Activated CD8-positive, alpha-beta T cell treated with anti-CD3 and anti-CD28 coated beads for 36 hours (primary cell): ENCODE measurements at regions of chr2 and their contacts with region 1.

Region 1: DNA sequence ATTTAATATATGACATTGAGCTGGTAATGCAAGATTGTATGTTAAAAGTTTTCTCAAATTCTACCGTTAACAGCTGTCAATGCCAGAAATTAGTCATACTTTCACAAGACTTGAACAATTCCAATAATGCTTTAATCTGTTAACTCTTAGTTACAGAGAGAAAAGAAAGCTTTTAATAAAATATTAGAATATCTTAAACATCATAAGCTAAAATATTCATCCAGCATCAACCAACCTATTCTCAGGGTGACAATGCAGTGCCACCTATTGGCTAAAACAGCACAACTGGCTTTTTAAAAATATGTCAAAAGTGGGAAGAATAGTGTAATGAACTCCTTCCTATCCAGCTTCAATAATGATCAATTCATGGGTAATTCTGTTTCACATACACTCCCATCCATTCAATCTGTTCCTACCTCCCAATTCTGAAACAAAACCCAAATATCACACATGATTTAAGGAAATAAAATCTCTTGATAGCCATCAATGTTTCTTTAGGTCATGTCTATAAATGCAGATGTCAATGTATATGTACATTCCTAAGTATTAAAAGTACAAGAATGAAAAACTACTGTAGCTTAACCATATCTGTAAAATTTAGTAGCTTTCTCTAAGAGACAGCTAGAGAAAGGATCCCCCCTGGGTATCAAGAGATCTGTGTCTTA is 79.8 kb upstream of the CCDC141 start:
- DNase-seq: peak; percentile 22
- ATAC-seq: no peak
- H3K4me3 Mint-ChIP-seq: no peak overlapping the region
- H3K27ac Mint-ChIP-seq: no peak overlapping the region
- H3K4me1 Mint-ChIP-seq: no peaks in the 10 kb centered on the region
- H3K27me3 Mint-ChIP-seq: no peaks in the 10 kb centered on the region
- CTCF ChIP-seq: peak; percentile 75

Region 2: DNA sequence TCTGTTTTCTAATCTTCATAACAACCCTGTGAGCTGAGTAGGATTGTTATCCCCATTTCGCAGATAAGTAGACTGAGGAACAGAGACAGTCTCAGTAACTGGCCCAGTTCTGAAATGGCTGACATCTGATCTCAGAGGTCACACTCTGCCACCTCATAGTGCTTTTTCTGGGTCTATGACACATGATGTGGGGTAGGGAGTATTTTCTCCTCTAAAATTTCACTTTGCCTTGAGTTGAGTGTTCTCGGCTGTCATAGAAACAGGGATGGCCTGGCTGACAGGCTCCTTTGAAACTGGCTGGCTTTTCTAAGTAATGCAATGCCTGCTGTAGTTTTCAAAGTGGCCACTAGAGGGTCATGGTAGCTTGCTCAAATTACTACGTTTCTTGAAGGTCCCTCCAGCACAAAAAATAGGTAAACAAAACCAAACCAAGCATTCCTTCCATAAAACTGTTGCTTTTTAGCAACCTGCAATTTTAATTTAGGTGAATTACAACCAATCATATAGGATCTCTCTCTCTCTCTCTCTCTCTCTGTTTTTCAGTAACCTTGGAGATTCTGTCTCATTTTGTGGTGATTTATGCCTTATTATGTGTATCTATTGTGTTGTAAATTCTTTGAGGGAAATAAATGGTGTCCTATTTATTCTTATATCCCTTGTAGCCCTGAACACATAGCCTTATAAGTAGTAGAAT is 238.3 kb before region 1 on chr2:
- CTCF ChIA-PET with region 1: interaction called, 33 read pairs
- POLR2A ChIA-PET with region 1: no interaction called
- intact Hi-C with region 1: loop called (anchors 1 kb)
- DNase-seq: peak; percentile 83
- ATAC-seq: peak; percentile 98
- H3K4me3 Mint-ChIP-seq: no peak overlapping the region
- H3K27ac Mint-ChIP-seq: no peak overlapping the region
- H3K4me1 Mint-ChIP-seq: peaks cover 3% of the 10 kb centered on the region
- H3K27me3 Mint-ChIP-seq: no peaks in the 10 kb centered on the region
- CTCF ChIP-seq: peak; percentile 95

Region 3: GRCh38 chr2:179106676-179107428 is 22.9 kb before region 1 on chr2:
- CTCF ChIA-PET with region 1: interaction called, 15 read pairs
- POLR2A ChIA-PET with region 1: no interaction called
- intact Hi-C with region 1: no loop called
- DNase-seq: peak; percentile 42
- ATAC-seq: peak; percentile 70
- H3K4me3 Mint-ChIP-seq: peak overlapping the region; percentile 3
- H3K27ac Mint-ChIP-seq: peak overlapping the region; percentile 40
- H3K4me1 Mint-ChIP-seq: peaks cover 35% of the 10 kb centered on the region
- H3K27me3 Mint-ChIP-seq: no peaks in the 10 kb centered on the region
- CTCF ChIP-seq: no peak

Region 4: DNA sequence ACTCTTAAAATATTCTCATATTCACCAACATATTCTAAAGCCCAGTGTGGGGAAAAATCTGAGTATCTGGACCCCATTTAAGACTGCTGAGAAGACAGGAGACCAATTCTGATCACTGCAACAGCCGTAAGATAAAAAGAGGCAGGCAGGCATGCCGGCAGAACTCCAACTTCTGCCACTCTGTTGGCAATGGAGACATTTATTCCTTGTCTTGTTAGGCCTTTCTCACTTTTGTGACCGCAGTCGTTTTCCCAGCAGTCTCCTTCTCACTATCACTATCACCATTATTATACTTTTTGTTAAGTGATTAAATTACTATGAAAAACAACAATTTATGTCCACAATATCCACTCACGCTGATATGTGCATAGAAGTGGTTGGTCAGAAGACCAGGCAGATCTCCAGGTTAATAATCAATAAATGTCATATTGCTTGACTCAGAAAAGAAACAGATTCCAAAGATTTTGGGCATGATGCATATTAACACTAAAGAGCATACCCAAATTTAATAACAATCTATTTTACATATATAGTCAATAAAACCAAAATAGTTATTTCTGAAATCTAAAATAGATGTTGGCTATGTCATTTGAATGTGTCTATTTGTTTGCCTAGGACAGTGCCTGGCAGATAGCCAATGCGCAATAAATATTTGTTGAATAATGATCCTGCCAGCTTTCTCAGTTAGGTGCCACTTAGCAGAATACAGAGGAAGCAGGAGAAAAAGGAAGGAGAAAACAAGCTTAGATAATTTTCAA is 96.7 kb after region 1 on chr2:
- CTCF ChIA-PET with region 1: no interaction called
- POLR2A ChIA-PET with region 1: no interaction called
- intact Hi-C with region 1: no loop called
- DNase-seq: no peak
- ATAC-seq: no peak
- H3K4me3 Mint-ChIP-seq: no peak overlapping the region
- H3K27ac Mint-ChIP-seq: no peak overlapping the region
- H3K4me1 Mint-ChIP-seq: no peaks in the 10 kb centered on the region
- H3K27me3 Mint-ChIP-seq: no peaks in the 10 kb centered on the region
- CTCF ChIP-seq: no peak